ENCODE measurements at regions of chr13 and their contacts with region 1.

Region 1: GRCh38 chr13:96141027-96141426 is 51.1 kb downstream of the HS6ST3 start:
- DNase-seq: no peak
- ATAC-seq: no peak

Region 2: GRCh38 chr13:96119921-96120320 is 21.1 kb before region 1 on chr13:
- intact Hi-C with region 1: no loop called
- DNase-seq: no peak
- ATAC-seq: no peak

Region 3: GRCh38 chr13:96252903-96253302 is 111.9 kb after region 1 on chr13:
- intact Hi-C with region 1: no loop called
- DNase-seq: no peak
- ATAC-seq: no peak

Region 4: DNA sequence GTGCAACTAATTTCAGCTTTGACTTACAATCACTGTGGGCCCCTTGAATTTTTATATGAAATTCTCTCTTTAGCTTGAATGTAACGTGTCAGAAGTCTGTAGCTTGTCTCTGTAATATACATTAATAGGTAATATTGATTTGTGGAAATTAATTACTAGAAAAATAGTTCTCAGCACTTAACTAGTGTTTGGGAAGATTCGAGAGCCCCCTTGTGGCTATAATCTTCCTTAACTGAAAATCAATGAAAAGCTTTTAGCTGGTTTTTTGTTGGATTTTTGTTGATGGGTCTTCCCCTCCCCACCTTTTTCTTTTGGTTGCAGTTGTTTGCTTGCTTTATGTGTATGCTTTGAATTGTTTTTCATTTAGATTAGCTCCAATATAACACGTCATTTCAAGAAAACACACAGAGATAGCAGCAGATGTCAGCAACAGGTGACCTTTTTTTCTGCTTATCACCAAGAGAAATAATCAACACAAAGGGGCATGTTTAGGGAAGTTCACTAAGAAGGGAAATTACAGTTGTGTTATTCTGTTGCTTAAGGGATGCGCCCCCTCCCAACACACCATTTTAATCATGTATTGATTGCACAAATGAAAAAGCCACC is 676.4 kb after region 1 on chr13:
- intact Hi-C with region 1: loop called (anchors 5 kb)
- DNase-seq: no peak
- ATAC-seq: no peak

Measured in Right ventricle myocardium inferior (tissue), 1 donor.